Mammary epithelial cell (primary cell): ENCODE measurements at regions of chr4 and their contacts with region 1.

Region 1: DNA sequence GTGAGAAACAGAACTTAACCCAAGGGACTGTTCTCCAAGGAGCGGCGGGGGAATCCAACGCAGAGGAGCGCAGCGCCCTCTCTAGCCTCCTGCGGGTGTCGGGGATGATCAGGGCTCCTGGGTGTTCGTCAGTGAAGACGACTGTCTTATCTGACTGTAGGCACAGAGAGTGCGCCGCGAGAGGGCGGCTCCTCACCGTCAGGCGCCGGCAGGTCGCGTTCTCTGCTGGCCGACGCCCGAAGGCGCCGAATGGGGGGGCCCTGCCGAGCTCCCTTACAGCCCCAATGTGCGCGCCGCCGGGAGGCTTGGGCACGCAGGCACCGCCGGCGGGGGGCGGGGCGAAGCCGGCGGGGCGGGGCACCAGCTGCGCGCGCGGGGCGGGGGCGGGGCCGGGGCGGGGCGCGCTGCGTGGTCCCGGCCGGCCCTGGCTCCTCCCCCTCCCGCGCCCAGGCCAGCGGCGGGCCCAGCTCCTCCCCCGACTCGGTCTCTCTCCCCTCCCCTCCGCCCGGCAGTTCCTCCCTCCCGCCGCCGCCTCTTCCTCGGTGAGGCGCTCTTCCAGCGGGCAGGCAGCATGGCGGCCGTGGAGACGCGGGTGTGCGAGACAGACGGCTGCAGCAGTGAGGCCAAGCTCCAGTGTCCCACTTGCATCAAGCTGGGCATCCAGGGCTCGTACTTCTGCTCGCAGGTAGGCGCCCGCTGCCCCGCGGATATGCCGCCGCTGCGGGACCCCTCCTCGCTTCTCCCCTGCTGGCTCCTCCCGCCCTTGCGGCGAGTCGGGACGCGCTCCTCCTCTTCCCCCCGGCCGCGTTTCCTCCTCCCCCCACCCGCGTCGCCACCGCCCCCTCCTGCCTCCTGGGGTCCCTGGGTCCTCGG is at the start of gene METAP1:
- DNase-seq: peak; percentile 97
- H3K4me3 ChIP-seq: peak within 1 kb of the TSS; percentile 94 to 98 (median 97)
- H3K27ac ChIP-seq: peak within 1 kb of the TSS; percentile 81
- H3K4me1 ChIP-seq: peaks cover 27% of the 10 kb centered on the region
- H3K27me3 ChIP-seq: no peaks in the 10 kb centered on the region
- CTCF ChIP-seq: peak; percentile 34 to 79
- total RNA-seq, gene METAP1: 67.7 to 72.7 TPM

Region 2: GRCh38 chr4:98150092-98150761 is 845.2 kb before region 1 on chr4:
- CTCF ChIA-PET with region 1: no interaction called
- dilution Hi-C with region 1: no loop called
- in situ Hi-C with region 1: no loop called
- intact Hi-C with region 1: loop called (anchors 5 kb)
- DNase-seq: no peak
- H3K4me3 ChIP-seq: no peak overlapping the region
- H3K27ac ChIP-seq: no peak overlapping the region
- H3K4me1 ChIP-seq: no peaks in the 10 kb centered on the region
- H3K27me3 ChIP-seq: no peaks in the 10 kb centered on the region
- CTCF ChIP-seq: peak in 1 of 2 donors; percentile 14

Region 3: GRCh38 chr4:98706200-98706813 is 289.1 kb before region 1 on chr4:
- CTCF ChIA-PET with region 1: no interaction called
- dilution Hi-C with region 1: no loop called
- in situ Hi-C with region 1: no loop called
- intact Hi-C with region 1: no loop called
- DNase-seq: no peak
- H3K4me3 ChIP-seq: no peak overlapping the region
- H3K27ac ChIP-seq: no peak overlapping the region
- H3K4me1 ChIP-seq: no peaks in the 10 kb centered on the region
- H3K27me3 ChIP-seq: no peaks in the 10 kb centered on the region
- CTCF ChIP-seq: no peak

Region 4: GRCh38 chr4:98745366-98745765 is 250.1 kb before region 1 on chr4:
- CTCF ChIA-PET with region 1: no interaction called
- dilution Hi-C with region 1: no loop called
- in situ Hi-C with region 1: no loop called
- intact Hi-C with region 1: loop called (anchors 1 kb)
- DNase-seq: peak; percentile 32
- H3K4me3 ChIP-seq: no peak overlapping the region
- H3K27ac ChIP-seq: no peak overlapping the region
- H3K4me1 ChIP-seq: no peaks in the 10 kb centered on the region
- H3K27me3 ChIP-seq: no peaks in the 10 kb centered on the region
- CTCF ChIP-seq: peak; percentile 19 to 63

Region 5: DNA sequence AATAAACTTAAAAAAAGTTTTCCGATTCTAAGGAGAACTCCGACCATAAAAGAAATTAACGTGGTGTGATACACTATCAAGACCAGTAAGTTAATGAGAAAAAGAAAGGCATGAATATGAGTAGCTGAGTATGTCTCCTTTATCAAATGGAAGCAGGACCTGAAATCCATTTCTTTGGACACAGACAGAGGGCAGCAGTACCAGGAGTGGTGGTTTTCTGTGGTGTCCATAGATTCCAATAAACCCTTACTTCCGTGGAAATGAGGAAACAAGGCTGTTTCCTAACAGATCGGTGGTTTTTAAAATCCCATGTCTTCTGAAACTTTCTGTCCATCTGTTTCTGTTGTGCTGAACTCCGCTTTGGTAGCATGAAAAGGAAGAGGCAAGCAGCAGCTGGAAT is 208.6 kb before region 1 on chr4:
- CTCF ChIA-PET with region 1: no interaction called
- dilution Hi-C with region 1: no loop called
- in situ Hi-C with region 1: no loop called
- intact Hi-C with region 1: no loop called
- DNase-seq: no peak
- H3K4me3 ChIP-seq: no peak overlapping the region
- H3K27ac ChIP-seq: no peak overlapping the region
- H3K4me1 ChIP-seq: no peaks in the 10 kb centered on the region
- H3K27me3 ChIP-seq: no peaks in the 10 kb centered on the region
- CTCF ChIP-seq: peak in 1 of 2 donors; percentile 28

Region 6: GRCh38 chr4:98822144-98822543 is 173.3 kb before region 1 on chr4:
- CTCF ChIA-PET with region 1: no interaction called
- dilution Hi-C with region 1: no loop called
- in situ Hi-C with region 1: no loop called
- intact Hi-C with region 1: no loop called
- DNase-seq: no peak
- H3K4me3 ChIP-seq: no peak overlapping the region
- H3K27ac ChIP-seq: no peak overlapping the region
- H3K4me1 ChIP-seq: no peaks in the 10 kb centered on the region
- H3K27me3 ChIP-seq: no peaks in the 10 kb centered on the region
- CTCF ChIP-seq: no peak

Region 7: DNA sequence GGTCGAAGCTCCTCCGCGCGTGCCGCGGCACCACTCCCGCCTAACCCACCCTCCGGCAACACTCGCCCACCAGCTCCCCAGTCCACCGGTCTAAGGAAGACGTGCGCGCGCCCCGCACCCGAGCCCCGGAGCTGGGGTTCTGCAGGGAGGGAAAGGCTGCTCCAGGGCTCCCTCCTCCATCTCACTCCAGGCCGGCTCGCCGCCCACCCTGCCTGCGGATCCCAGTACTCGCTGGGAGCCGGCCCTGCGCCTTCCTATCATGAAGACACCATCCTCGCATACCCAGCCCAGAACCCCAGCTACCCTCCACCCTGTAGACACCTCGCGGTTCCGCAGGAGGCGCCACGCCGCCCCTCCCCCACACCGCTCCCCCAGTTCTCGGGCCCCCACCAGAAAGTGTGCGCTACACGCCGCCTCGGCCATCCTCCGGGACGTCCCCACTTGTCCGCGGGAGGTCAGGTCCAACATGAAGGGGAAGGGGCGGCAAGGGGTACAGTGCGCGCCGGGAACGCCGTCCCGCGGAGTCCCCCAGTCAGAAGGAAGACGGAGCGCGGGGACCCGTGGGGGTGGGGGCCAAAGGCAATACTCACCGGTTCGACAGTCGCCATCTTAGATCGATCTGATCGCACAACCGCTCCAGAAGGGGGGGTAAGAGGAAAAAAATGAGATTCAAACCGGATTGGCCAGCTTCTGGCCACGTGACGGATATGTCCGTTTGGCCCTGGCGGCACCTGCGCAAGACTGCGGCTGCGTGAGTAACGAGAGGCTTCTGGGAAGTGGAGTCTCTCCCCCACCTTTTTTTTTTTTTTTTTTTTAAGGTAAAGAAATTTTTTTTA is 66.7 kb before region 1 on chr4 and contains the start of gene EIF4E:
- CTCF ChIA-PET with region 1: no interaction called
- dilution Hi-C with region 1: no loop called
- in situ Hi-C with region 1: no loop called
- intact Hi-C with region 1: loop called (anchors 2 kb)
- DNase-seq: peak; percentile 99
- H3K4me3 ChIP-seq: peak within 1 kb of the TSS; percentile 96 to 99 (median 99)
- H3K27ac ChIP-seq: peak within 1 kb of the TSS; percentile 99
- H3K4me1 ChIP-seq: peaks cover 7% of the 10 kb centered on the region
- H3K27me3 ChIP-seq: no peaks in the 10 kb centered on the region
- CTCF ChIP-seq: peak; percentile 2 to 22
- total RNA-seq, gene EIF4E: 104 to 113 TPM

Region 8: GRCh38 chr4:98963538-98964433 is 31.6 kb before region 1 on chr4:
- CTCF ChIA-PET with region 1: interaction called, 3 read pairs
- dilution Hi-C with region 1: no loop called
- in situ Hi-C with region 1: no loop called
- intact Hi-C with region 1: loop called (anchors 2 kb)
- DNase-seq: peak; percentile 88
- H3K4me3 ChIP-seq: no peak overlapping the region
- H3K27ac ChIP-seq: peak overlapping the region; percentile 70
- H3K4me1 ChIP-seq: peaks cover 25% of the 10 kb centered on the region
- H3K27me3 ChIP-seq: no peaks in the 10 kb centered on the region
- CTCF ChIP-seq: no peak

Region 9: DNA sequence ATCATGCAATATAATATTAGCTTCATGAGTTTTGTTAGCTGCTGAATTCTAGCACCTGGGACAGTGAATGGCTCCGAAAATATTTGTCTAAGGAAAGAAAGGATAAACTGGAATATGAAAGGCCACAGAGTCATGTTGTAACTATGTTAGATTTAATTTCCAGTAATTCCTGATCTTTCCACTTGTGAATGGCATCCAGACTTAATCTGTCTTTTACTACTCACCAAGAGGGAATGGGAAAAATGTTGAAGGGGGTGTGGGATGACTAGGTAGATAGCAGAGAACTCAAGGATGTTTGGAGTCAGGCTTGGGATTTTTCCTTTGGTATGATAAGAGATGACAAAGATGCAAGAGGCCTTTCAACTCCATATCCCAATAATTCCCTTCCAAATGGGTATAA is 214.3 kb after region 1 on chr4:
- CTCF ChIA-PET with region 1: no interaction called
- dilution Hi-C with region 1: no loop called
- in situ Hi-C with region 1: no loop called
- intact Hi-C with region 1: no loop called
- DNase-seq: no peak
- H3K4me3 ChIP-seq: no peak overlapping the region
- H3K27ac ChIP-seq: no peak overlapping the region
- H3K4me1 ChIP-seq: no peaks in the 10 kb centered on the region
- H3K27me3 ChIP-seq: no peaks in the 10 kb centered on the region
- CTCF ChIP-seq: no peak